ENCODE measurements at regions of chr18 and their contacts with region 1.

Region 1: GRCh38 chr18:26656944-26657536 is 108.7 kb upstream of the KCTD1 start:
- DNase-seq: peak; percentile 55 to 96 (median 73)

Region 2: DNA sequence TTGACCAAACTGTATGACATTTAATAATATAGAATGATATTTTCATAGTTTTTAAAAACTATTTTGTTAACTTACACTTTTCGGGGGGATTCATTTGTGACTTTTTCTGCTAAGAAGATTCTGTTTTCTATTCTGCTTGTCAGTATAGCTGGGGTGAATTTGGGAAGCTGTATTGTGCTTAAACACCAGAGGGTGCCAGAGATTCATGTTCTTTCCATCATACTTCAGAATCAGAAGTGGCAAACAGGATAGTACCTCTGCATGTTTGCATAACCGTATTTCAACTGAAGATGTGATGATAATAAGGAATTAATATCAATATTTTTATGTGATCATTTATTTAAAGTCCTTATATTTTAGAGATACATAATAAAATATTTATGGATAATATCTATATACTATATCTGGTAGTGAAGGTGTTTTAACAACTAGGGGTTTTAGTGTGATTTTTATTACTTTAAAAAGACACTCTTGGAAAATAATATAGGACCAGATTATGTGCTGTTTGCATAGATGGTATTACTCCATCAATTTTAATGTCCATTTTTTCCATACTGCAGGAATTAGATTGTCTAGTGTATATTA is 349.8 kb before region 1 on chr18:
- intact Hi-C with region 1: loop called (anchors 5 kb)
- DNase-seq: peak in 1 of 10 donors; percentile 16

Region 3: DNA sequence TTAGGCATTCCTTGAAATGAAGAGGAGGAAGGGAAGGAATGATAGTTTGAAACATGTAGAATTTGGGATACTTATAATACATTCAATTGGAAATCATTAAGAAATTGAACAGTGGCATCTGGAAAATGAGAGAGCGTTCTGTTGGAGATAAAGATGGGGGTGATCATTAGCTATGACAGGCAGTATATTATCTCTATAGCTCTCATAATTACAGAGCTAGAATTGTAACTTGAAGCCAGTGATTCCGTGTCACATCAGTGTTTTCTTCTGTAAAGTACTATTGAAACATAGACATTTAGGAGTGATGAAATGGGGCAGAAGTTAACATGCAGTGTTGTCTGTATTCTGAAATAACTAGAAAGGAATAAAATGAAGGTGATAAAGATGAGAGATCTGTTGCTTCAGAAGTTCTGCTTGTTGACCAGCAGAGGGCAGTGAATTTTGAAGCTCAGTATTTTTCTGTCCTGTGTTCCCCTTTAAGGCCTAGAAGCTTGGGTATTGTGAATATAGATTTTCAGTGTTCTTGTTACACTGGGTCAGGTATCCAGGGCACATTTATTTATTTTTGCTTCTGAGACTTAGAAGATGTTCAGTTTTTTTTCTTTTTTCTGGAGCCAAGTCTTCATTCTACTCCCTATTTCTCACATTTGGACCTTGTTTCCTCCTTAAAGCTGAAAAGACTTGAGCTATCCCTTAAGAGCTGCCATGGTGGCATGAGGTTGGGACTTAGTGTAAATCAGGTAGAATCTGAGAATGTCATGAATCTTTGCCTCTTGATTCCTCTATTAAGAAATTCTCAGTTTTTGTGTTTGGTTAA is 273.4 kb before region 1 on chr18:
- intact Hi-C with region 1: loop called (anchors 5 kb)
- DNase-seq: no peak

Region 4: GRCh38 chr18:26548429-26549262 is 108.4 kb before region 1 on chr18 and contains the start of gene KCTD1:
- intact Hi-C with region 1: loop called (anchors 2 kb)
- DNase-seq: peak; percentile 70 to 95 (median 76)

Region 5: GRCh38 chr18:26568926-26569665 is 87.9 kb before region 1 on chr18:
- intact Hi-C with region 1: no loop called
- DNase-seq: peak in 2 of 10 donors; percentile 12 to 42

Region 6: GRCh38 chr18:26746279-26747150 is 89.5 kb after region 1 on chr18:
- intact Hi-C with region 1: no loop called
- DNase-seq: no peak

Region 7: GRCh38 chr18:26802330-26803200 is 145.5 kb after region 1 on chr18:
- intact Hi-C with region 1: no loop called
- DNase-seq: no peak

Measured in posterior cingulate gyrus (tissue), 11 donors.